ENCODE measurements at regions of chr2 and their contacts with region 1.

Region 1: DNA sequence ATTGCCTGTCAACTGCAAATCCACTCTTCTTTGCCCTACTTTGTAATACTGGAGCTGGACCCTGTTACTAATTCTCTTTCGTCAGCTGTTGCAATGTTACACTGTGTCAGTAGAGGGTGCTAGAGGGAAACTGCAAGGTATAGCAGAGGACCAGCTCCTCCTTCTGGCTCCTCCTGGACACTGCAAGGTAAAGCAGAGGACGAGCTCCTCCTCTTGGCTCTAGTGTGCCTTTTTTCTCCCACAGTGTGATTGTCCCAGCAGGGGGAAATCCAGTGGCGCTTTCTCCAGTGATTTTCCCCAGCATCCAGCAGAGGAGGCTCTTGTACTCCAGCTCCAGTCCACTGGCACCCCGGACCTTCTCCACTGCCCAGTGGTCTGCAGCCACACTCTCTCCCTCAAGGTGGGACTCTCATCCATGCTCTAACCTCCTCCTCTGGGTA is 95.6 kb downstream of the CAPN13 start:
- DNase-seq: peak; percentile 84 to 90 (median 85)
- H3K4me3 ChIP-seq: no peak overlapping the region
- H3K4me3 Mint-ChIP-seq: no peak overlapping the region
- H3K27ac ChIP-seq: no peak overlapping the region
- H3K27ac Mint-ChIP-seq: no peak overlapping the region
- H3K4me1 ChIP-seq: no peaks in the 10 kb centered on the region
- H3K4me1 Mint-ChIP-seq: peaks cover 0 to 9% (median 3%) of the 10 kb centered on the region in 4 donors
- H3K27me3 ChIP-seq: no peaks in the 10 kb centered on the region
- H3K27me3 Mint-ChIP-seq: peaks cover 0 to 3% of the 10 kb centered on the region in 2 donors

Region 2: DNA sequence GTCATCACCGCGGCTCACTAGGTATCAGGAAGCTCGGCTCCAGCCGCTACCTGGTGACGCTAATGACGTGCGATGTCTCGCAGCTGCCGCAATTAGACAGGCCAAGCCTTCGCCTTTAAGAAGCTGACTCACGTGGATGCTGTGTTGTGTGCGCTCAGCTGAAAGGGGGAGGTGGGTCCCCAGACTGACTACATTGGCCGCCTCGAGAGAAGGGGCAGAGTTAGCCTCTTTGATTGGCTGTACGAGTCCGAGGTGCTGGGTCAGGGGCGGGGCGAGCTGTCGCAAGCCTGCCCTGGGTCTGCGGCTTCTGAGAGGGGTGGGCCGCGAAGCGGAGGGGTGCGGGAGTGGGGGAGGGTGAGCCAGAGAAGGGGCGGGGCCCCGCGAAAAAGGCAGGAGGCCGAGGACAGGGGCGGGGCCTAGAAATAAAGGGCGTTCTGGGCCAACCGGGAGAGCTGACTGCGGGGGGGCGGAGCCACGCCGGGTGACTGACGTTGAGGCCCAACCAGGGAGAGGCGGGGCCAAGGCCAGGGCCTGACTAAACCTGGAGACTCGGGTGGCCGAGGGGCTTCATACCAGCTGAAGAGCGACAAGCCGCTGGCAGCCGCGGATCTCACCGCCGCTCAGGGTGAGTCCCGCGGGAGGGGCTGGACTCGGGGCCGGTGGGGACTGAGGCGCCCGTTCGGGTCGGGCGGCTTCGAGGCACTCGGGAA is 565.1 kb before region 1 on chr2 and contains the start of gene YPEL5:
- CTCF ChIA-PET with region 1: interaction called, 95 read pairs
- POLR2A ChIA-PET with region 1: interaction called, 11 read pairs
- intact Hi-C with region 1: loop called (anchors 5 kb)
- DNase-seq: peak; percentile 99 to 100 (median 100)
- H3K4me3 ChIP-seq: peak within 1 kb of the TSS; percentile 49 to 78
- H3K4me3 Mint-ChIP-seq: peak within 1 kb of the TSS; percentile 86 to 94 (median 88)
- H3K27ac ChIP-seq: peak within 1 kb of the TSS; percentile 99
- H3K27ac Mint-ChIP-seq: peak within 1 kb of the TSS; percentile 98 to 100 (median 100)
- H3K4me1 ChIP-seq: peaks cover 54% of the 10 kb centered on the region
- H3K4me1 Mint-ChIP-seq: peaks cover 36 to 73% (median 43%) of the 10 kb centered on the region in 4 donors
- H3K27me3 ChIP-seq: no peaks in the 10 kb centered on the region
- H3K27me3 Mint-ChIP-seq: no peaks in the 10 kb centered on the region
- total RNA-seq, gene YPEL5: 81.5 to 88.4 TPM

Region 3: GRCh38 chr2:30193104-30193681 is 518.5 kb before region 1 on chr2:
- CTCF ChIA-PET with region 1: interaction called, 19 read pairs
- POLR2A ChIA-PET with region 1: no interaction called
- intact Hi-C with region 1: no loop called
- DNase-seq: no peak
- H3K4me3 ChIP-seq: no peak overlapping the region
- H3K4me3 Mint-ChIP-seq: no peak overlapping the region
- H3K27ac ChIP-seq: no peak overlapping the region
- H3K27ac Mint-ChIP-seq: peak overlapping the region in 1 of 7 donors; percentile 25
- H3K4me1 ChIP-seq: no peaks in the 10 kb centered on the region
- H3K4me1 Mint-ChIP-seq: peaks cover 0 to under 1% (median 0%) of the 10 kb centered on the region in 4 donors
- H3K27me3 ChIP-seq: no peaks in the 10 kb centered on the region
- H3K27me3 Mint-ChIP-seq: peaks cover 0 to 1% of the 10 kb centered on the region in 2 donors

Region 4: DNA sequence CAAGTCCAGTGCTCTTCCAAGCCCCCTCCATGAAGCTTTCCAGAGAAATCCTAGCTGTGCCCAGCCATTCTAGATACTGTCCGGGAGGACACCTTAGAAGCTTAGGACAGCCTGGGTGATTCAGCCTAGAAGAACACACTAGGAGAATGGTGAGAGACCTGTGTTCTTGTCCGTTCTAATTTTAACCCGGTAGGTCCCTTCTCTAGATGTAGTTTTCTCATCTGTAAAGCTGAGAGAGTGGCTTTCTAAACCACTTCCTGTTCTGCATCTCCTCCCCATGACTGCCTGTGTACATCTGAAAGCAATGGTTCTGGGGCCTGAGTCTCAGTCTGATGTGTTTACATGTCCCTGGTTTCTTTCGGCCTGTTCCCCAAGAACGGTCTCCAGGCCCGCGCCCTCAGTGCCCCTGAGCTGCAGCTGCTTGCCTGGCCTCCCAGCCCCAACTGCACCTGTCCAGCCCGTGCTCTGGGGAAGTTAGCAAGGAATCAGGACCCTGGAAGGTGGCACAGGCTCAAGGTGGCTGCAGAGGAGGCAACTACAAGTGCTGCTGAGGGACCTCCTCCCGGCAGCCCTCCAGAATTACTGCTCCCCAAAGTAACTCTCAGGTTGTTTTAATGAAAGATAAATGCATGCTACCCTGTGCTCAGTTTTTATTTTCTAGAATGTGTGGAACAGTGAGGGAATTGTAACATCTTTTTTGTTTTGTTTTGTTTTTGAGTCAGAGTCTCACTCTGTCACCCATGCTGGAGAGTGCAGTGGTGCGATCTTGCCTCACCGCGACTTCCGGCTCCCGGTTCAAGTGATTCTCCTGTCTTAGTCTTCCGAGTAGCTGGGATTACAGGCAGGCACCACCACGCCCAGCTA is 374.5 kb before region 1 on chr2:
- CTCF ChIA-PET with region 1: interaction called, 42 read pairs
- POLR2A ChIA-PET with region 1: interaction called, 5 read pairs
- intact Hi-C with region 1: loop called (anchors 2 kb)
- DNase-seq: peak; percentile 58 to 66 (median 64)
- H3K4me3 ChIP-seq: peak overlapping the region; percentile 10 to 61
- H3K4me3 Mint-ChIP-seq: peak overlapping the region; percentile 76 to 89 (median 82)
- H3K27ac ChIP-seq: peak overlapping the region; percentile 58
- H3K27ac Mint-ChIP-seq: peak overlapping the region; percentile 94 to 97 (median 96)
- H3K4me1 ChIP-seq: peaks cover 72% of the 10 kb centered on the region
- H3K4me1 Mint-ChIP-seq: peaks cover 63 to 74% (median 70%) of the 10 kb centered on the region in 4 donors
- H3K27me3 ChIP-seq: no peaks in the 10 kb centered on the region
- H3K27me3 Mint-ChIP-seq: no peaks in the 10 kb centered on the region

Region 5: DNA sequence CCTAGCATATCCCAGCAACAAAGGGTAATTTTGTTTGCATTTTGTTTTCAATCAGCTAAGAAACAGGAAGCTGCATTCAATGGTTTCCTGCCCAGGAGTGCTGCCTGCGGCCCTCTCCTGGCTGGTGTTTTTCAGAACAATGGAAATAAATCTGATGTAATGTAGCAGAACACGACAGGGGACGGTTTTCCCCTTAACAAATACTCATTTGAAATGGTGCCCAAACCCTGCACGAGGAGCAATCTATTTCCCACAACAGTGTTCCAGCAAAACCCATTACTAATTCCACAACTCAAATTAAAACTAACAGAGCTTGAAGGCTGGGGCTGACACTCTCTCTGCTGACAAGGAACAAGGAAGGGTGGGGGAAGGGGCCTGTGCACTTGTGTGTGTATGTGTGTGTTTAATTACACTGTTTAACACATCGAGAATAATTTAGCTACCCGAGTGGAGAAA is 86.9 kb after region 1 on chr2:
- CTCF ChIA-PET with region 1: no interaction called
- POLR2A ChIA-PET with region 1: no interaction called
- intact Hi-C with region 1: no loop called
- DNase-seq: no peak
- H3K4me3 ChIP-seq: no peak overlapping the region
- H3K4me3 Mint-ChIP-seq: no peak overlapping the region
- H3K27ac ChIP-seq: no peak overlapping the region
- H3K27ac Mint-ChIP-seq: peak overlapping the region in 4 of 7 donors; percentile 7 to 48 (median 33)
- H3K4me1 ChIP-seq: no peaks in the 10 kb centered on the region
- H3K4me1 Mint-ChIP-seq: peaks cover 0 to 8% (median 8%) of the 10 kb centered on the region in 4 donors
- H3K27me3 ChIP-seq: no peaks in the 10 kb centered on the region
- H3K27me3 Mint-ChIP-seq: peaks cover 0 to 4% of the 10 kb centered on the region in 2 donors

Region 6: GRCh38 chr2:30862054-30862651 is 150.5 kb after region 1 on chr2:
- CTCF ChIA-PET with region 1: interaction called, 63 read pairs
- POLR2A ChIA-PET with region 1: no interaction called
- intact Hi-C with region 1: loop called (anchors 1 kb)
- DNase-seq: peak; percentile 32 to 51 (median 42)
- H3K4me3 ChIP-seq: no peak overlapping the region
- H3K4me3 Mint-ChIP-seq: no peak overlapping the region
- H3K27ac ChIP-seq: no peak overlapping the region
- H3K27ac Mint-ChIP-seq: no peak overlapping the region
- H3K4me1 ChIP-seq: no peaks in the 10 kb centered on the region
- H3K4me1 Mint-ChIP-seq: peaks cover 4 to 12% (median 6%) of the 10 kb centered on the region in 4 donors
- H3K27me3 ChIP-seq: no peaks in the 10 kb centered on the region
- H3K27me3 Mint-ChIP-seq: peaks cover 3 to 6% of the 10 kb centered on the region in 2 donors

Region 7: GRCh38 chr2:31333527-31334183 is 622.0 kb after region 1 on chr2:
- CTCF ChIA-PET with region 1: interaction called, 249 read pairs
- POLR2A ChIA-PET with region 1: interaction called, 4 read pairs
- intact Hi-C with region 1: loop called (anchors 1 kb)
- DNase-seq: peak; percentile 71 to 76 (median 75)
- H3K4me3 ChIP-seq: no peak overlapping the region
- H3K4me3 Mint-ChIP-seq: no peak overlapping the region
- H3K27ac ChIP-seq: no peak overlapping the region
- H3K27ac Mint-ChIP-seq: peak overlapping the region in 2 of 7 donors; percentile 20 to 48
- H3K4me1 ChIP-seq: no peaks in the 10 kb centered on the region
- H3K4me1 Mint-ChIP-seq: no peaks in the 10 kb centered on the region
- H3K27me3 ChIP-seq: no peaks in the 10 kb centered on the region
- H3K27me3 Mint-ChIP-seq: peaks cover 1 to 3% of the 10 kb centered on the region in 2 donors

Region 8: GRCh38 chr2:32264422-32265105 is 1552.9 kb after region 1 on chr2 and contains the start of gene NLRC4:
- CTCF ChIA-PET with region 1: no interaction called
- POLR2A ChIA-PET with region 1: no interaction called
- intact Hi-C with region 1: no loop called
- DNase-seq: no peak
- H3K4me3 ChIP-seq: no peak within 1 kb of the TSS
- H3K4me3 Mint-ChIP-seq: peak within 1 kb of the TSS in 7 of 8 donors; percentile 6 to 54 (median 36)
- H3K27ac ChIP-seq: no peak within 1 kb of the TSS
- H3K27ac Mint-ChIP-seq: peak within 1 kb of the TSS in 5 of 7 donors; percentile 11 to 89 (median 70)
- H3K4me1 ChIP-seq: peaks cover 4% of the 10 kb centered on the region
- H3K4me1 Mint-ChIP-seq: peaks cover 2 to 5% (median 4%) of the 10 kb centered on the region in 4 donors
- H3K27me3 ChIP-seq: no peaks in the 10 kb centered on the region
- H3K27me3 Mint-ChIP-seq: peaks cover 0 to 3% of the 10 kb centered on the region in 2 donors
- total RNA-seq, gene NLRC4: 0.11 to 0.20 TPM

Measured in CD4-positive, alpha-beta memory T cell (primary cell).